ENCODE measurements at regions of chr6 and their contacts with region 1.

Region 1: DNA sequence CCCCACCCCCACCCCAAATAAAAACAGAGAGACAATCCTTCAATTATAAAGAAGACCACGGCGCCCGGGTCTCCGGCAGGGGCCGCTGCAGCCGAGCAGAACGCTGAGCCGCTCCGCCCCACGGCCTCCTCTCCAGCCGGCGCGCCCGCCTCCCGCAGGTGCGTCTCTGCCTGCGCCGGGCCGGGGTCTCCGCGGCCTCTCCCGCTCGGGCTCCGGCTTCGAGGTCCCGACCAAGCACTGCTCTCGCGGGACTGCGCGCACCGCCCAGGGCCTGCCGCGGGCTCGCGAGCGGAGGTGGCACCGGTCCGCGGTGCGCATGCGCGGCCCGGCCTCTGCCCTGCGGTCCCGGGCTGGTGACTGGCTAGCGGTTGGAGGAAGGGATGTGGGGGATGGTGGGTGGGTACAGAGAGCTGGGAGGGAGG is 241 bp upstream of the SIRT5 start:
- DNase-seq: peak; percentile 90
- H3K4me3 Mint-ChIP-seq: peak overlapping the region; percentile 92
- H3K27ac Mint-ChIP-seq: peak overlapping the region; percentile 99
- H3K4me1 Mint-ChIP-seq: peaks cover 19% of the 10 kb centered on the region
- H3K27me3 Mint-ChIP-seq: peaks cover 9% of the 10 kb centered on the region

Region 2: DNA sequence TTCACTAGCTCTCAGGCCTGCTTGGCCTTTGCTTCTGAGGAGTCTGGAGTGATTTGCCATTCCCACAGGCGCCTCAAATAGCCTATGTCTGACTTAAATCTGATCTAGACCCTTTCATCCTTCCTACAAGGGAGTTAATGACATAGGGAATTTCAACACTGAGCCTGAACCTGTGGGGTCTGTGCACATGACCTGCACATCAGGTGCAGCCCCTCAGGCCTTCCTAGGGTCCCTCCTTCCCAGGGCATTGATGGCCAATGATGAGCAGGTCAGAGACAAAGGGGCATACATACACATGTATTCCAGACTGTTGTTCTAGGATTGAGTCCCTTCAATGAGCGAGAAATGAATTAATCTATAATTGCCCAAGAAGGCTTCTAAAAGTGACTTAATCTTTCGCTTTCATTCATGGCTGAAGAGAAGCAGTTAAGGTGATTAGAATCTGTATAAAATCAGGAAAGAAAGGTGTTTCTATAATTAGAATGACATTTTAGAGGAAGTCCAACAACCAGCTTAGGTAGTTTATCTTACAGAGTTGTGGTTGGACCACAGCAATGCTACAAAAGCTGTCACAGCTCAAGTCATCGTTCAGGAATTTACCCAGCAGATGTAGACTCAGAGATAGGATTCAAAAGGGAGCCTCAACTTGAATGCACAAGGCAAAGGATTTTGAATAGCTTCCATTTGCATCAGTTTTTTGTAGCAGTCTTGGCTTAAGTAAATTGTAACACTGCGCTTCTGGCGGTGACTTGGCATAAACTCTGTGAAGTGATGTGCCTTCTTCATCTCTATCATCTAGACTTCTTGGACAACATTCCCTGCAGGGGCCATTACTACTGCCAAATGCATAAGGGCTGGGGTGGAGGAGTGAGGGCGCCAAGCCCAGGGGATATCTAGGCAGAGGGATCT is 218.9 kb before region 1 on chr6:
- intact Hi-C with region 1: loop called (anchors 1 kb)
- DNase-seq: peak; percentile 36
- H3K4me3 Mint-ChIP-seq: peak overlapping the region; percentile 75
- H3K27ac Mint-ChIP-seq: peak overlapping the region; percentile 95
- H3K4me1 Mint-ChIP-seq: peaks cover 67% of the 10 kb centered on the region
- H3K27me3 Mint-ChIP-seq: no peaks in the 10 kb centered on the region

Region 3: DNA sequence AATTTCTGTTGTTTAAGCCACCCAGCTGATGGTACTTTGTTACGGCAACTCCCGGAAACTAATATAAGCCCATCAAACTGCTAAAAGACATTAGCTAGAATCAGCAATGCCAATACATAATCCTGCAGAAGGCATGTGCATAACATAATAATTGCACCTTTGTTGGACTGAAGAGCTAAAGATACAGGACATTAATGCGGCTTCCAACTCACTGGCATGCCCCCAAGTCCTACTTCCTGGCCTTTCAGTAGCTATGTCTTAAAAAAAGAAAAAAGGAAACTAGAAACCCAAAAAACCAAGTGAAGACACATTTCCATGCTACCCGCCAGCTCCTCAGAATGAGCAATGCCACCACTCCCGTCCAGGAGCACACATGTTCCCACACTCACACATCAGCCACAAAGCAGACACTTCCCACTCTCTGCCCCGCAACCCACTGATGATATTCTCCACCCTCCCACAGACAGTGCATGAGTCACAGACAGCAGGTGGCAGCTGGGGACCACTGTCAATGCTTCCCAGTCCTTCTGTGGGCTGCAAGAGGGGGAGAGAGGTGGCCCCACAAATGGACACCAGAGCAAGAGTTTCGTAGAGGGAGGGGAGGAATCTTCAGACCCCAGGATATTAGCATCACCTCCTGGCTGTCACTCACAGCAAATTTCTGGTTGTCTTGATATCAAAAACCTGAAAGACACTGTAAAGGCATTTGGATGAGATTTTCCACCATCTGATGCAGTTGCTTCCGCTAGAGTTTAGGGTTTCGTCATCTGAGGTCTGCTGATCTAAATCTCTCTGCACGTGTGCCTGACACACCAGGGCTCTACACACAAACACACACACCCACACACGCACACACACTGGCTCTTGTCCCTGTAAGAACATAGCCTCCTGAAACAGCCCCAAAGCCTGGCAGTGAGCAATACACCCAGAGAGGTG is 119.6 kb before region 1 on chr6:
- intact Hi-C with region 1: loop called (anchors 1 kb)
- DNase-seq: peak; percentile 55
- H3K4me3 Mint-ChIP-seq: peak overlapping the region; percentile 27
- H3K27ac Mint-ChIP-seq: peak overlapping the region; percentile 88
- H3K4me1 Mint-ChIP-seq: peaks cover 55% of the 10 kb centered on the region
- H3K27me3 Mint-ChIP-seq: peaks cover 1% of the 10 kb centered on the region

Region 4: GRCh38 chr6:13668291-13668928 is 94.2 kb after region 1 on chr6:
- intact Hi-C with region 1: no loop called
- DNase-seq: no peak
- H3K4me3 Mint-ChIP-seq: no peak overlapping the region
- H3K27ac Mint-ChIP-seq: peak overlapping the region; percentile 77
- H3K4me1 Mint-ChIP-seq: peaks cover 83% of the 10 kb centered on the region
- H3K27me3 Mint-ChIP-seq: no peaks in the 10 kb centered on the region

Region 5: DNA sequence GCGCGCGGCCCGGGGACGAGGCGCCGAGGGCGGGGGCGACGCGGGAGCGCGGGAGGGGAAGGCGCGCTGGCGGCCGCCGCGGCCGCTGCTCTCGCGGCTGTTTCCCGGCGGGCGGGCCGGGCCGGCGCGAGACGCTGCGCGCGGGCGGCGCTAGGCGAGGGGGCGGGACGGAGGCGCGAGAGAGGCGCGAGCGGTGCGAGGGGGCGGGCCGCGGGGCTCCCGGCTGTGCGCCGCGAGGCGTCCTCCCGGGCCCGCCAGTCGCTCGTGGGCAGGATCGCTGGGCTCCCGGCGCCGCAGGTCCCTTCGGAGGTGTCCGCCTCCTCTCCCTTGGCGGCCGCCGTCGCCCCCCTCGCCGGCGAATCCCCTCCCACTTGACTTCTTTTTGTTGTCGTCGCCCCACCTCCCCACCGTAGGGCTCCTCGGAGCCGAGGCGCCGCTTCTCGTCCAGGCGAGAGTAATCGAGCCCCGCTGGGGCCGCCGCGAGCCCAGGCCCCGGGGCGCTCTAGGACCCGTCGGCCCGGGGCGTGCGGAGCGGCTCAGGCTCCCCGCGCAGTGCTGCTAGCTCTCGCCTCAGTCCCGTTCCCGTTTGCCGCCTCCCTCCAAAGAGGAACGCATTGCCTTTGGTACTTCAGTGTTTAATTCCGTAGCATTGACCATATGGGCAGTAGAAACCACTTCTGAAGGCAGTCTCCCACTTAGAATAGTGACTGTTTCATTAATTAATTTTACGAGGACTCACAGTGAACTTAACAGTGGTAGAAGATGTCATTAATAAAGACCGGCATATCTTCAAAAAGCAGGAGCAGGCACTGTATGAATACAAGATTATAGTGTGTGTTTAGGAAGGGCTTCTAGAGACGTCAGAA is 137.8 kb after region 1 on chr6 and contains the start of gene RANBP9:
- intact Hi-C with region 1: loop called (anchors 1 kb)
- DNase-seq: peak; percentile 86
- H3K4me3 Mint-ChIP-seq: peak within 1 kb of the TSS; percentile 93
- H3K27ac Mint-ChIP-seq: peak within 1 kb of the TSS; percentile 96
- H3K4me1 Mint-ChIP-seq: peaks cover 63% of the 10 kb centered on the region
- H3K27me3 Mint-ChIP-seq: no peaks in the 10 kb centered on the region
- total RNA-seq, gene RANBP9: 58.4 and 60.1 TPM in 2 replicates

Region 6: DNA sequence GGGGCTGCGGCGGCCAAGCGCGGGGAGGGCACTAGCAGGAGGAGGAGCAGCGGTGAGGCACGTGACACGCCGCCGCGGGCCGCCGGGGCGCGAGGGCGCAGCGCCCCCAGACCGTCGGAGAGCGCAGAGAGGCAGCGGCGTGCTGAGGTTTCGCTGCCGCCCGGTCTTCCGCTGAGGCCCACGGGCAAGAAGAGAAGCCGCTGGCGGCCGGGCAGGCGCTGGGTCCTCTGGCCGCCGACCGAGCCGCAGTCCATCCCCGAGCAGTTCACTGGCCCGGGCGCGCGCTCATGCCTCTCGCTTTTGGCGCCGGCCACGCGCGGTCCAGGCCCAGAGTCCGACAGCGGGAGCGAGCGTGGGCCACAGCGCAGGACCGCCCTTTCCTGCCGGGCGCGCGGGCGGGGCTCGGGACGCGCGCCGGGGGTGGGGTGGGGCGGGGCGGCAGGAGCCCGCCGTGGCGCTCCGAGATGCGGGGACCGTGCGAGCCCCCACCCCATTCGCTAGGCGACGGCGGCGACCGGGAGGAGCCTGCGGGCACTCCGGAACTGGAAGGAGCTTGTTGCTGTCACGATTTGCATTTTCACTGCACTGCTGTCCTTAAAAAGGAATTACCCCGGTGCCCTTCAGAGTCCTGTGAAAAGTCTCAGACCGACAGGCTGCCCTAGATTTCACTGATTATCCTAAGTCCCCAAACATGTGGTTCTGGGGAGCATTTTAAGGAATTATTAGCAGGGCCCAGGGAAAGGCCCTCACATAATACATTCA is 240.2 kb after region 1 on chr6 and contains the start of gene MCUR1:
- intact Hi-C with region 1: loop called (anchors 2 kb)
- DNase-seq: peak; percentile 80
- H3K4me3 Mint-ChIP-seq: peak within 1 kb of the TSS; percentile 85
- H3K27ac Mint-ChIP-seq: peak within 1 kb of the TSS; percentile 52
- H3K4me1 Mint-ChIP-seq: peaks cover 38% of the 10 kb centered on the region
- H3K27me3 Mint-ChIP-seq: peaks cover 2% of the 10 kb centered on the region
- total RNA-seq, gene MCUR1: 37.8 and 40.2 TPM in 2 replicates

Measured in activated T-helper 1 cell treated with anti-CD3 and anti-CD28 coated beads, Interleukin-12 subunit alpha, Interleukin-12 subunit beta, Interleukin-2, Interleukin-4 antibody, amounts not matched to agents 30 ng/mL and 10 ng/mL and 1 ng/mL, durations not matched to agents 14 hours and 24 hours and 36 hours (primary cell).